H1 (cell line): ENCODE measurements at regions of chr22 and their contacts with region 1.

Region 1: DNA sequence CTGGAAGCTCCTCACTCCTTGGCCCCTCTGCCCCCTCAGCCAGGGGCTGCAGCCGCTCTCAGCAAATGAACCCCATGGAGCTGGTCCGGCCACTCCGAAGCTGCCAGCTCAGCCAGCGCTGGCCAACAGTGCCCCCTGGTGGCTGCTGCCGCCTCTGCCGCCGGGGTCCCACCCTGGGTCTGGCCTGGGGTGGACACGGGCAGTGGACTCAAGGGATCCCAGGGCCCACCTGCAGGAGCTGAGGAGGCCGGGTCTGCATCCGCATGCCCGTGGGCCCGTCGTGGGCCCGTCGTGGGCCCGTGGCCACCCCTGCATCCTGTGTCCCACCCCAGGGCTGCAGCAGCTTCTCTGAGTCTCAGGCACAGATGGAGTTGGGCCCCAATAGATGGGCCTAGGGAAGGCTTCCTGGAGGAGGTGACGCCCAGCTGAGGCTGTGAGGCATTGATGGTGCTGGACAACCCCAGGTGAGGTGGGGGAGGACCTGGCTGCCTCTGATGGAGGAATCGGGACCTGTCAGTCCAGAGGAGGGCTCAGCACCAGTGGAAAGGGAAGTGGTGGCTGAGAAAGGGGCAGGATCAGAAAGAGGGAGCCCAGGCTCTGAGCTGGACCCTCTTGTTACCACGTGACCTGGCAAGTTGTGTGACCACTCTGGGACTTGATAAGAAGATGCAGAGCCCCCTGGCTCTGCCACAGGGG is 522.3 kb downstream of the BRD1 start:
- DNase-seq: peak; percentile 38 to 100
- H3K4me3 ChIP-seq: no peak overlapping the region
- H3K27ac ChIP-seq: no peak overlapping the region
- H3K4me1 ChIP-seq: peaks cover 0 to 4% (median 2%) of the 10 kb centered on the region in 4 experiments; a peak in 4 of 7 replicates
- H3K27me3 ChIP-seq: no peaks in the 10 kb centered on the region; a peak in 1 of 7 replicates
- CTCF ChIP-seq: peak; percentile 90 to 96 (median 94)
- EP300 ChIP-seq: peak in 1 of 2 experiments; percentile 74; a peak in 1 of 3 replicates
- POLR2A ChIP-seq: no peak
- RAD21 ChIP-seq: peak; percentile 99

Region 2: GRCh38 chr22:48943567-48944432 is 361.6 kb before region 1 on chr22:
- CTCF ChIA-PET with region 1: interaction called, 10 read pairs
- POLR2A ChIA-PET with region 1: no interaction called
- DNase-seq: peak; percentile 33 to 77
- H3K4me3 ChIP-seq: no peak overlapping the region
- H3K27ac ChIP-seq: no peak overlapping the region
- H3K4me1 ChIP-seq: no peaks in the 10 kb centered on the region
- H3K27me3 ChIP-seq: no peaks in the 10 kb centered on the region; a peak in 2 of 7 replicates
- CTCF ChIP-seq: peak; percentile 93 to 97 (median 95)
- EP300 ChIP-seq: no peak
- POLR2A ChIP-seq: no peak
- RAD21 ChIP-seq: peak; percentile 77 to 87

Region 3: GRCh38 chr22:49170053-49170452 is 135.3 kb before region 1 on chr22:
- CTCF ChIA-PET with region 1: interaction called, 14 read pairs
- POLR2A ChIA-PET with region 1: no interaction called
- DNase-seq: no peak
- H3K4me3 ChIP-seq: no peak overlapping the region
- H3K27ac ChIP-seq: no peak overlapping the region
- H3K4me1 ChIP-seq: no peaks in the 10 kb centered on the region
- H3K27me3 ChIP-seq: no peaks in the 10 kb centered on the region; a peak in 1 of 7 replicates
- CTCF ChIP-seq: peak; percentile 48 to 59 (median 55)
- EP300 ChIP-seq: no peak
- POLR2A ChIP-seq: no peak
- RAD21 ChIP-seq: peak; percentile 72 to 82

Region 4: DNA sequence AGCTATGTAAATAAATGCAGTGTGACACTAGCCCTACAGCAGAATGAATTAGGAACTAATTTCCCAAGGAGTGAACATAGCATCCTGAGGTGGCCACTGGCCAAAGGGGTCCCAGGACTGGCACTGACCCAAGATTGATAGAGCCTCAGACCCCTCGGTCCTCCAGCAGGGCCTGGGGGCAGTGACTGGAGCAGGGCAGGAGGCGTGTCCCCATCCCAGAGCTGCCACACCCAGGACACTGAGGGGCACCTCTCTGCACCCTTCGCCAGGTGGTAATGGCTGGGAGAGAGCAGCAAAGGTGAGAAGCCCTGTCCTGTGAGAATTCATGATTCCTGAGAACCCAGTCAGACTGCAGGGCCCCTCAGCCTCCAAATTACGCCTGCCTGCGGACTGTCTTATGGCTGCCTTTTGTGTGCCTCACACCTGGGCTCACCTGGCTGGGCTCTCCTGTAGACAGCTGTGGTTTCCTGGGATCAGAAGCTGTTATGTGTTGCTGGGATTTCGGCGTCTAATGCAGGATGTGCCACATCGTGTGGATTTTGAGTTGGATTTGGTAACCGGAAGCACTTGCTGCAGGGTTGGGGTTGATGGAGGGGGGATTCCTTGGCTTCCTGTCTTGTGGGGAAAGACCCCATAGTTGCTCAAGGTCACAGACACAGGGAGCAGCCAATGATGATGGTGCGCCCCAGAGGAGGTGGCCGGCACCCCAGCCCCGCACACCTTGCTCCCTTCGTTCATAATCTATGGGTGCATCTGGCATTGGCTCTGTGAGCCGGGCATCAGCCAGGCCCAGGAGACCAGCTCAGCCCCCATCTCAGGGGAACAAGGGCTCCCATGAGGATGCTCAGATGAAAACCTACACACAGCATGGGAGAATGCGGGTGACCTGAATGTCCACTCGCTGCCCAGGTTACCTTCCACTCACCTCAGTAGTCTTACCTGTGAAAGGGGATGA is 60.6 kb before region 1 on chr22:
- CTCF ChIA-PET with region 1: interaction called, 11 read pairs
- POLR2A ChIA-PET with region 1: no interaction called
- DNase-seq: peak in 1 of 2 experiments; percentile 37
- H3K4me3 ChIP-seq: no peak overlapping the region
- H3K27ac ChIP-seq: no peak overlapping the region
- H3K4me1 ChIP-seq: no peaks in the 10 kb centered on the region
- H3K27me3 ChIP-seq: no peaks in the 10 kb centered on the region
- CTCF ChIP-seq: no peak
- EP300 ChIP-seq: no peak
- POLR2A ChIP-seq: no peak
- RAD21 ChIP-seq: no peak

Region 5: DNA sequence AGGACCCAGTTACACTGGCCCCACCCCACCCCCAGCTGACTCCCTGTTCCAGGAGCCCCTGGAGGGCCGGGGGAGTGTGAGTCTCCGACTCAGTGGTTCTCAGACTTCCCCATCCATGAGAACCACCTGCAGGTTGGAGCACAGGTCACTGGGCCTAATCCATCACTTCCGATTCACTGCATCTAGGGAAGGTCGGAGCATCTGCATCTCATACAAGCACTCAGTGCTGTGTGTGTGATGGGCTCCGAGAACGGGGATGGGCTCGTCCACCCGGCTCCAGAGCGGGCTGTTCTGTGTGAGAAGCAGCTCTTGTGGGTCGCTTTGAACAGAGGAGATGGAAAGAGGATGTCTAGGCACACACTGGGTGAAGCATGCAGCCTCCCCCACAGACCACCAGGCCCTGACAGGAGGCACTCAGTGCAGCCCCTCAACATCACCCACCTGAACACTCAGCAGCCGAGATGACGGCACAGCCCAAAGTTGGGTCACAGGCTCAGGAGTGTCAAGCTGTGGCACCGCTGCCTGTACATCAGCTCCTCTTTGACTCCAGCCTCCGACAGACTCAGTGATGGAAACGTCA is 19.1 kb before region 1 on chr22:
- CTCF ChIA-PET with region 1: interaction called, 16 read pairs
- POLR2A ChIA-PET with region 1: no interaction called
- DNase-seq: no peak
- H3K4me3 ChIP-seq: no peak overlapping the region
- H3K27ac ChIP-seq: no peak overlapping the region
- H3K4me1 ChIP-seq: peaks cover 0 to 2% (median 1%) of the 10 kb centered on the region in 4 experiments; a peak in 3 of 7 replicates
- H3K27me3 ChIP-seq: 0 out of 7 replicates have a peak, but pooled peaks cover 0 to 2% (median 0%) of the 10 kb centered on the region in 4 experiments
- CTCF ChIP-seq: no peak
- EP300 ChIP-seq: no peak
- POLR2A ChIP-seq: no peak
- RAD21 ChIP-seq: no peak

Region 6: DNA sequence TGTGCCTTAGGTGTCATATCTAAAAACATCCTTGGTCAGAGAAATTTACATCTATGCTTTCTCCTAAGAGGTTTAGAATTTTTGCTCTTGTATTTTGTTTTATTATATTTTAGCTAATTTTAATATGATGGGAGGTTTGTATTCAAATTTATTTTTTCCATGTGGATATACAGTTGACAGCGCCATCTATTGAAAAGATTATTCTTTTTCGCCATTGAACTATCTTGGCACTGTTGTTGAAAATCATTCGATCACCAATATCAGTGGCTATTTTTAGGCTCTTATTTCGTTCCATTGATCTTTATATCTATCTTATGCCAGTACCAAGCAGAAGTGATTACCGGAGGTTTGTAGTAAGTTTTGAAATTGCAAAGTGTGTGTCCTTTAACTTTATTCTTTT is 12.0 kb after region 1 on chr22:
- CTCF ChIA-PET with region 1: interaction called, 10 read pairs
- POLR2A ChIA-PET with region 1: interaction called, 3 read pairs
- DNase-seq: no peak
- H3K4me3 ChIP-seq: no peak overlapping the region
- H3K27ac ChIP-seq: no peak overlapping the region
- H3K4me1 ChIP-seq: peaks cover 0 to 2% (median 0%) of the 10 kb centered on the region in 4 experiments; a peak in 2 of 7 replicates
- H3K27me3 ChIP-seq: no peaks in the 10 kb centered on the region
- CTCF ChIP-seq: no peak; a peak in 1 of 4 replicates
- EP300 ChIP-seq: no peak
- POLR2A ChIP-seq: no peak
- RAD21 ChIP-seq: peak in 1 of 2 experiments; percentile 27; a peak in 3 of 4 replicates

Region 7: DNA sequence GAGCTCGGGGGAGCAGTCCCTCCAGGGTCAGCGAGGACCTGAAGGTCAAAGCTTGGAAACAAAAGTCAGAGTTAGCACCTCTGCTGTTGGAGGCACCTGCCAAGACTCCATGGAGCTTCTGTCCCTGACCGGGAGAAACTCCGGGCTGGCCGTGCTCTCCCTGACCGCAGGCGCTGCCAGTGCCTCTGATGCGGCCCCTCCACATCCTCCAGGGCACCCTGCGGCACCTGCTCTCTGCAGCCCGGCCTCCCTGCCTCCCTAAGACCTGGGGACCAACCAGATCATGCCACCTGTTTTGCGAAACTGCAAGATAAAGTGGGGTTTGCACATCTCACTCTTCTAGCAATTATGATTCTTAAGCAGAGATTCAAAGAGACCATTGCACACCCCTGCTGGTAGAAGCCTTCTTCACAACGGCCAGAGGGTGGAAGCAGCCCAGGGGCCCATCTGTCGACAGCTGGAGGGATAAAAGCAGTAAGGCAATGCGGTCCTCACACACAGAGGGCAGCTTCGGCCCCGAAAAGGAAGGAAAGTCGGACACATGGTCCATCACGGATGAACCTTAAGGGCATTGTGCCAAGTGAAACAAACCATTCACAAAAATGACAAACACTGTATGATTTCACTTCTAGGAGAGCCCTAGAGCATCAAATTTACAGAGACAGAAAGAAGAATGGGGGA is 45.2 kb after region 1 on chr22:
- CTCF ChIA-PET with region 1: no interaction called
- POLR2A ChIA-PET with region 1: no interaction called
- DNase-seq: no peak
- H3K4me3 ChIP-seq: no peak overlapping the region
- H3K27ac ChIP-seq: no peak overlapping the region
- H3K4me1 ChIP-seq: no peaks in the 10 kb centered on the region; a peak in 1 of 7 replicates
- H3K27me3 ChIP-seq: no peaks in the 10 kb centered on the region
- CTCF ChIP-seq: no peak
- EP300 ChIP-seq: no peak
- POLR2A ChIP-seq: no peak
- RAD21 ChIP-seq: no peak

Region 8: DNA sequence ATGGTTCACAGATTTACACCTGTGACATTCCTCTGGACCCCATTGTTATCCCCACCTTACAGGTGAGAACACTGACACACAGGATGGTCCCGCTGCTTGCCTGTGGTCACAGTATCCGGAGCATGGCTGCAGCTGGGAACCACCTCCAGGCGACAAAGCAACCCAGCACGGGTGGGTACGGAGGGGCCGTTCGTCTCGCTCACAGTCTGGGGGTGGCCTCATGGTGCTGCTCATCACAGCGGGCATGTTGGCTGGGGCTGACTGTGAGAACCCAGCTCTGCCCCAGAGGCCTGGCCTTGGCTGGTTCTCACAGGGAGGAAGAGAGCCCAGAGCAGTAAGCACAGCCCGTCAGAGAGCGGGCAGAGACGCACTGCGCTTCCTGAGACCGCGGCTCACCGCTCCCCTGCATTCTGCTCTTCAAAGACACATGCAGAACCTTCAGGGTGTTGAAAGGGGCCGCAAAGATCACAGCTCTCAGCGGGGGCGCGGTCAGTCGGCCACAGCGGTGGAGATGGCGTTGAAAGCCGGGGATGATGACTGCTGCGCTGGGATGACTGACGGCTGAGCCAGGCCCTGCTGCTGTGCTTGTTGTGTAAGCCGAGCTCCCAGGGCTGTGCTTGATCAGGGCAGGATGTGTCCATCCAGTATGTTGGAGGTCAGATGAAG is 99.3 kb after region 1 on chr22:
- CTCF ChIA-PET with region 1: no interaction called
- POLR2A ChIA-PET with region 1: no interaction called
- DNase-seq: no peak
- H3K4me3 ChIP-seq: no peak overlapping the region
- H3K27ac ChIP-seq: no peak overlapping the region
- H3K4me1 ChIP-seq: no peaks in the 10 kb centered on the region
- H3K27me3 ChIP-seq: no peaks in the 10 kb centered on the region
- CTCF ChIP-seq: no peak
- EP300 ChIP-seq: no peak
- POLR2A ChIP-seq: no peak
- RAD21 ChIP-seq: no peak

Region 9: DNA sequence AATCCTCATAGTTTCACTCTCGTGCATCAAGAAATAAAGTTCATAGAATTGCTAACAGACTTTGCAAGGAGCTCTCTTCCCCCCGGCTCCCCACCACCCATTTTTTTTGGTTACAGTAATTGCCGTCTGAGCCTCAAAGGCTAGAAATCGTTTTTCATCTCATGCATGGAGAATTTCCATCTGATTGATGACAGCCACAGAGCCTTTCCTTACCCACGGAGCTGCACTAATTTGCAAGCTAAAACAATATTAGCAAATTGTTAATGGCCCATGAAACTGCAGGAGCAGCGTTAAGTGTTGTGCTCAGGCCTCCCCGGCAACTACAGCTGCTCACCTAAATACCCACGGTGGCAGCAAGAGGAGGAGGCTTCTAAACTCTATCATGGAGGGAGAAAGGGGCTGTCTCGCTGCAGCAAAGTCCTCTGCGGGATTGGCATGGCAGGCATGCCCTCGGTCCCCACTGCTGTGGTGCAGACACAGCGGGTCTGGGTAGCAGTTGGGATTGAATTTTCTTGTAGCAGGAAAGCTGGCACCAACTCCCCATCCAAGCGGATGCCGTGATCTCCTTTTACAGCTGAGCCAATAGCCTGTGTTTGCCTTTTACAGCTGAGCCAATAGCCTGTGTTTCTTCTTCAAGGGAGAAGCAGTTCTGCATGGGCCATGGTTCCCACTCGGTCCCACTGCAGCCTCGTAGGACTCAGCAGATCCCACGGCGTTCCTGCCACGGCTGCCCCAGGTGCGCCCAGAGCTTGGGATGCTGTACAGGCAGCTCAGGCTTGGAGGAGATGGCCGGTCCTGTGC is 110.0 kb after region 1 on chr22:
- CTCF ChIA-PET with region 1: no interaction called
- POLR2A ChIA-PET with region 1: no interaction called
- DNase-seq: no peak
- H3K4me3 ChIP-seq: no peak overlapping the region
- H3K27ac ChIP-seq: no peak overlapping the region
- H3K4me1 ChIP-seq: peaks cover 0 to 2% (median 0%) of the 10 kb centered on the region in 4 experiments; a peak in 2 of 7 replicates
- H3K27me3 ChIP-seq: no peaks in the 10 kb centered on the region
- CTCF ChIP-seq: no peak
- EP300 ChIP-seq: no peak
- POLR2A ChIP-seq: no peak
- RAD21 ChIP-seq: no peak

Region 10: DNA sequence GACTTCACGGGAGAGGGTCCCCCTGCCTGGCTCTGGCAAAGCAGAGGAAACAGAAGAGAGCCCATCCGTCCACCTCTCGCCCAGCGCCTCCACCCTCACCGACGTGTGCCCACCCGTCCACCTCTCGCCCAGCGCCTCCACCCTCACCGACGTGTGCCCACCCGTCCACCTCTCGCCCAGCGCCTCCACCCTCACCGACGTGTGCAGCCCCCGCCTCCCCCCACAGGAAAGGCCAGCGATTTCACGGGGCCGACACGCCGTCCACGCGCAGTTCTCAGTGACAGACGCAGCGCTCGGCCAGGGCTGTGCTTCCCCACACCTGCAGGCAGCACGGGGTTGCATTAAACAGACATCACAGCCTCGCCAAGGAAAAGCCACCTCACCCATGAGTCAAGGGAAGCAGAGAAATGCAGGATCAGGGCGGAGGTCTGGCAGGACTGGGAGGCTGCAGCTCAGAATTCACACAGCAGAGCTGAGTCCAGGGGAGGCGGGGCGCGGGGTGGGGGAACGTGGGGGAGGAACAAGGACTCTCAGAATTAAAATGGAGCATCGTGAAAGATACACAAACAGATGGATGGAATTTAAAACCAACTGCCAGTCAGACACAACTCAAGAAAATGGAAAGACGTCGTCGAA is 144.6 kb after region 1 on chr22:
- CTCF ChIA-PET with region 1: no interaction called
- POLR2A ChIA-PET with region 1: no interaction called
- DNase-seq: no peak
- H3K4me3 ChIP-seq: peak overlapping the region in 1 of 4 experiments; percentile 42; a peak in 3 of 8 replicates
- H3K27ac ChIP-seq: no peak overlapping the region
- H3K4me1 ChIP-seq: peaks cover 0 to 18% (median 12%) of the 10 kb centered on the region in 4 experiments; a peak in 6 of 7 replicates
- H3K27me3 ChIP-seq: peaks cover 2 to 26% (median 12%) of the 10 kb centered on the region in 4 experiments; a peak in 6 of 7 replicates
- CTCF ChIP-seq: no peak
- EP300 ChIP-seq: no peak
- POLR2A ChIP-seq: no peak
- RAD21 ChIP-seq: no peak